Activated naive CD4-positive, alpha-beta T cell treated with anti-CD3 and anti-CD28 coated beads for 36 hours (primary cell): ENCODE measurements at regions of chr1 and their contacts with region 1.

Region 1: DNA sequence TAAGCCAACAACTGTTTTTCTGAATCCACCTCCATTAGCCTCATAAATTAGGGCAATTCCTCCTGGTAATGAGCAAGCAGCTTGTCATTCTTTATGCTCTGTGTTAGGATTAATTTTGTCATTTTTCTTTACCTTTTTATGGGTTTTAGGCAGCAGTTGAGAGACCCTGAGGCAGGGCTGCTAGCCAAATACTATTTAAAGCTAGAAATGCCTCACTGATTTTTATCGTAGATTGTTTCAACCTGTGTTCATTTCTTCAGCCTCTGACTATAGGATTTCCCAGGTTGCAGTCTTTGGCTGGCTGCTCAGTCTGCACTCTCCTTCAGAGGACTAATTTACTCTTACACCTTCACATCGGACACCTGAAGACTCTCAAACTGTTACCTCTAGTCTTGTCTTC is 61.9 kb upstream of the RABGAP1L start:
- DNase-seq: no peak
- H3K4me3 Mint-ChIP-seq: no peak overlapping the region
- H3K27ac Mint-ChIP-seq: no peak overlapping the region
- H3K4me1 Mint-ChIP-seq: no peaks in the 10 kb centered on the region
- H3K27me3 Mint-ChIP-seq: peaks cover 2% of the 10 kb centered on the region

Region 2: DNA sequence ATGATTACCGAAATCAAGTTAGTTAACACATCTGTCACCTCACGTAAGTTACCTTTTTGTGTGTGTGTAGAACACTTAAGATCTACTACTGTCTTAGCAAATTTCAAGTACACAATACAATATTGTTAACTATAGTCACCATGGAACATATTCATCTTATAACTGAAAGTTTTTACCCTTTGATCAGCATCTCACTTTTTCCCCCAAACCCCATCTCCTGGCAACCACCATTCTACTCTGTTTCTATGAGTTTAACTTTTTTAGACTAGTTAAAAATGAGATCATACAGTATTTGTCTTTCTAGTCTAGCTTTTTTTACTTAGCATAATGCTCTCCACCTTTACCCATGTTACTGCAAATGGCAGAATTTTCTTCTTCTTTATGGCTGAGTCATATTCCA is 186.6 kb after region 1 on chr1:
- CTCF ChIA-PET with region 1: no interaction called
- intact Hi-C with region 1: no loop called
- DNase-seq: no peak
- H3K4me3 Mint-ChIP-seq: no peak overlapping the region
- H3K27ac Mint-ChIP-seq: no peak overlapping the region
- H3K4me1 Mint-ChIP-seq: peaks cover 7% of the 10 kb centered on the region
- H3K27me3 Mint-ChIP-seq: no peaks in the 10 kb centered on the region

Region 3: GRCh38 chr1:174743654-174744561 is 646.5 kb after region 1 on chr1:
- CTCF ChIA-PET with region 1: no interaction called
- intact Hi-C with region 1: loop called (anchors 10 kb)
- DNase-seq: no peak
- H3K4me3 Mint-ChIP-seq: no peak overlapping the region
- H3K27ac Mint-ChIP-seq: no peak overlapping the region
- H3K4me1 Mint-ChIP-seq: peaks cover 10% of the 10 kb centered on the region
- H3K27me3 Mint-ChIP-seq: no peaks in the 10 kb centered on the region